ENCODE measurements at regions of chr10 and their contacts with region 1.

Region 1: DNA sequence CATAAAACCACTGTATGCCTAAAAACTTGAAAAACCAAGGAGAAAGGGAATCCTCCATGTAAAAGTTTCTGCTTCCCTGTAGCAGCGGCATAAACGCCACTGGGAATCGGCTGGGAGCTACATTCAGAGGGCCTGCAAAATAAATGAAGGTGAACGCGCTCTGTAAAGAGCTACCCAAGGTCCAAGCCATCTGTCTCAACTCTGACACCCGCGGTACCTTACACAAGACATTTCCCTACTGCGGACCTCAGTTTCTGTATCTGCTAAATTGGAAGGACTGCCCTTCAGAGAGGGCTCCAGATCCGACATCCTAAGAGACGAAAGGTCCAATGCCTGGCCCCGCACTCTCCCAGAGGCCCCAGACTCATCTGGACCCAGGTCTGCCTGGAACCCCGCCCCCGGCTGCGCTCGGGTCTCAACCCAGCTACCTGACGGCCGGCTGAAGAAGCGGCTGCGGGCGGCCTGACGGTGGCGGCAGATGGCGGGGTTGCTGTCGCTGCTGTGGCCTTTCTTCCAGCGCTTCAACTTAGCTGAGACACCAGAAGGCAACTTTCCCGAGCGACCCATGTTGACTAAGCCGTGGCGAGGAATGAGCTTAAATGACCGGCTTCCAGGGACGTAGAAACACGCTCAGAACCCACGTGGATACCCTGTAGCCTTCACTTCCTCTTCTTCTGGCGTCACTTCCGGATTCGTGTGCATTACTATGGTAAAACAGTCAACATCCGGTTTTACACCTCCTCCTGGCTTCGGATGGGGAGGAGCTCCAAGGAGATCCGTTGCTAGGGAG is at the start of gene RRP12:
- DNase-seq: peak; percentile 96
- H3K4me3 ChIP-seq: peak within 1 kb of the TSS; percentile 69 to 81 (median 74)
- H3K27ac ChIP-seq: peak within 1 kb of the TSS; percentile 71 to 82 (median 78)
- H3K4me1 ChIP-seq: peaks cover 10 to 20% (median 16%) of the 10 kb centered on the region in 4 donors
- H3K27me3 ChIP-seq: no peaks in the 10 kb centered on the region
- CTCF ChIP-seq: peak in 1 of 3 experiments; percentile 6
- EP300 ChIP-seq: no peak
- POLR2A ChIP-seq: no peak
- total RNA-seq, gene RRP12: 7.1 to 20.0 (median 12.1) TPM

Region 2: DNA sequence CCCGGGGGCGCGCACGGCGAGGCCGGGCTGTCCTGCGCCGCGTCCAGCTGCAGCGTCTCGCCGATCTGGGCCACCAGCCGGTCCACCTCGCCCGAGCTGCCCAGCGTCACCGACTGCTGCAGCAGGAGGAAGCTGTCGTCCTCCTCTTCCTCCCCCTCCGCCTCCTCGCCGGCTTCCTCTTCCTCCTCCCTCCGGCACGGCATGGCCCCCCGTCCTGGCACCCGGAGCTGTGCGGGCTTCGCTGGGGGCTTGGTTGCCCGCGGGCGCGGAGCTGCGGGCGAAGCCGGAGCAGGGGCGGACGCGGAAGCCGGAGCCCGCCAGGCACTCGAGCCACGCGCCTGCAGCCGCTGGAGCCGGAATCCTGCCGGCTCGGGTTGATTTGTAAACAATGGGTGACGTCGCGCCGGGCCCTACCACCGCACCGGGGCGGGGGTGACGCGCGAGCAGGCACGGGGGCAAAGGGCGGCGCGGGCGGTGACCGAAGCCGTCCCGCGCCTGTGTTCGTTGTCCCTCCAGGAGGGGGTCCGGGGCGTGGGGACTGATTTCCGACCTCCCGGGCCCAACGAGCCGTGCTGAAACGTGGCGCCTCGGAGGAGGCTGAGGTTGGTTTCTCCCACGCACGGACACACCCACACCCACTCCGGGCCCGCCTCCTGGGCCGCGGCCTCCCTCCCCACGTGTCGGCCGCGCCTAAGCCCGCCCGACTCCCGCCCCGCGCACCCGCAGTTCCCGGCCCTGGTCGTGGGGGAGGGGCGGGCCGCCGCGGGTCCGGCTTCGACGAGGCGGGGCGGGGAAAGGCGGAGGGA is 66.3 kb before region 1 on chr10 and contains the start of gene FRAT2:
- intact Hi-C with region 1: loop called (anchors 2 kb)
- DNase-seq: peak; percentile 97
- H3K4me3 ChIP-seq: peak within 1 kb of the TSS; percentile 77 to 91 (median 84)
- H3K27ac ChIP-seq: peak within 1 kb of the TSS; percentile 83 to 97 (median 91)
- H3K4me1 ChIP-seq: peaks cover 44 to 73% (median 71%) of the 10 kb centered on the region in 4 donors
- H3K27me3 ChIP-seq: no peaks in the 10 kb centered on the region
- CTCF ChIP-seq: peak in 1 of 3 experiments; percentile 17
- EP300 ChIP-seq: no peak
- POLR2A ChIP-seq: peak; percentile 74
- total RNA-seq, gene FRAT2: 18.7 to 27.8 (median 19.6) TPM

Region 3: GRCh38 chr10:97553575-97554031 is 152.7 kb after region 1 on chr10:
- intact Hi-C with region 1: loop called (anchors 5 kb)
- DNase-seq: no peak
- H3K4me3 ChIP-seq: no peak overlapping the region
- H3K27ac ChIP-seq: peak overlapping the region in 1 of 4 donors; percentile 3
- H3K4me1 ChIP-seq: peaks cover 24 to 31% (median 28%) of the 10 kb centered on the region in 4 donors
- H3K27me3 ChIP-seq: no peaks in the 10 kb centered on the region
- CTCF ChIP-seq: peak; percentile 76 to 90 (median 87)
- EP300 ChIP-seq: no peak
- POLR2A ChIP-seq: no peak